ENCODE measurements at regions of chr14 and their contacts with region 1.

Region 1: GRCh38 chr14:75307700-75308379 is 29.2 kb downstream of the FOS start:
- DNase-seq: peak; percentile 62
- CTCF ChIP-seq: peak; percentile 92

Region 2: DNA sequence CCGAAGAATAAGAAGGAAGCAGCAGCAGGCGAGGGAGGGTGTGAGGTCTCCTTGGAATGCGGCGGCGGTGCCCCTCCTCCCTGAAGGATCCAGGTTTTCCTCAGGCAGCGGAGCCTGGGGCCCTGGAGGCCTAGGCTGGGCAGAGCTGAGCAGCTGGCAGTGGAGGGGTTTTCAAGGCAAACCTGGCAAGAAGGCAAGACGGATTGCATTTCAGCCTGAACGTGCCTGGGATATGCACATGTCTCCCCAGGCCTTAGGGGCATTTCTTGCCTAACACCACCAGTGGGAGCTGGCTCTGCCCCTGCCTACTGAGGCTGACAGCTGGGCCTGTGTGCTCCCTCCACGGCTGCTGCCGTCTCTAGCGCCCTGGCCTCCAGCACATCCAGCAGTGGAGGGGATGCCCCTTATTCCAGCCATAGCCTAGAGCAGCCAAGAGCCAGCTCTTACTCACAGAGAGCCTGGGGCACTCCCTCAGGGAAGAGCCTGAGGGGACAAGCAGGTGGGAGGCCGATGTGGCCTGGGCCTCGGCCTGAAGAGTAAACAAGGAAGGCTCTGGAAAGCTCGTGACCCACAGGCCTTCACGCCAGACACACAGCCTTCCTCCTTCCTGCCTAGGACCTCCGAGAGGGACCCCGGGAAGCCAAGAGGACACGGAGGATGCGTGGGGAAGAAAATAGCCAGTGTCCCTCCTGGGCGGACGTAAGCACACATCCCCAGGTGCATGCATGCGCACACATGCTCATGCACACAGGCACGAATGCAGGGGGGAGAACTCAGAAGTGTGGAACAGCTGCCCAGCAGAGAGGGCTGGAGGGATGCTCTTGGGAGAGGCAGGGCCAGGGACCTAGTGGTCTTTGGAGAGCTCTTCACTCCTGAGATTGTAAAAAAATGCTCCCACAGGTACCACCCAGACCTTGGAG is 328.1 kb before region 1 on chr14:
- in situ Hi-C with region 1: no loop called
- DNase-seq: peak; percentile 24
- CTCF ChIP-seq: no peak

Region 3: DNA sequence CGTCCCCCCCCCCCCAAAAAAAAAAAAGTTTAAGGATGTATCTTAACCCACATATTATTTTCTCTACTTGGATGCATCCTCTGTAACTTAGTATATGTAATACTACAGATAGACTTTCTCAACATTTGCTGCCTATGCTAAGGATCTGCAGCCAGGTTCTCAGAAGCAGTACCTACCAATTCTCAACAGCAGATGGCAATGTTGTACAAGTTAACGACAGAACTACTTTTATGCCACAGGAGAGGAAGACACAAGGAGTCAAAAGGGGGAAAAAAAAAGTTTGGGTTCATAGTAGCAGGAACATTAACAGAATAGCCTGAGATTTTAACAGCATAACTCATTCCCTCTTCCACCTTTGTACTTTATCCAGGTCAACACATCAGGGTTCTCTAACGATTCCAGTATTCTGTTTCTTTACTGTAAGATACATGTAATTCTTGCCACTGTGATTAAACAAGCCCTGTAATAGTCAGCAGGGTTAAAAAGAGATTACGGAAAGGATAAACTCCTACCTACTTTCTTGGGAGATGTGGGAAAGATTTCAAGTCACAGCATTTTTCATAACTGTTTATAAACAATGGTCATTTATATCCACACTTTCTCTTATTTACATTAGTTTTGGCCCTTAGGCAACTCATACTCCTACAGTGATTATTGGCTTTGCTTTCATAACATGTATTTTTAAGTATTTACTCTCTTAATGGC is 175.3 kb before region 1 on chr14:
- in situ Hi-C with region 1: loop called (anchors 5 kb)
- DNase-seq: peak; percentile 47
- CTCF ChIP-seq: peak; percentile 74

Region 4: DNA sequence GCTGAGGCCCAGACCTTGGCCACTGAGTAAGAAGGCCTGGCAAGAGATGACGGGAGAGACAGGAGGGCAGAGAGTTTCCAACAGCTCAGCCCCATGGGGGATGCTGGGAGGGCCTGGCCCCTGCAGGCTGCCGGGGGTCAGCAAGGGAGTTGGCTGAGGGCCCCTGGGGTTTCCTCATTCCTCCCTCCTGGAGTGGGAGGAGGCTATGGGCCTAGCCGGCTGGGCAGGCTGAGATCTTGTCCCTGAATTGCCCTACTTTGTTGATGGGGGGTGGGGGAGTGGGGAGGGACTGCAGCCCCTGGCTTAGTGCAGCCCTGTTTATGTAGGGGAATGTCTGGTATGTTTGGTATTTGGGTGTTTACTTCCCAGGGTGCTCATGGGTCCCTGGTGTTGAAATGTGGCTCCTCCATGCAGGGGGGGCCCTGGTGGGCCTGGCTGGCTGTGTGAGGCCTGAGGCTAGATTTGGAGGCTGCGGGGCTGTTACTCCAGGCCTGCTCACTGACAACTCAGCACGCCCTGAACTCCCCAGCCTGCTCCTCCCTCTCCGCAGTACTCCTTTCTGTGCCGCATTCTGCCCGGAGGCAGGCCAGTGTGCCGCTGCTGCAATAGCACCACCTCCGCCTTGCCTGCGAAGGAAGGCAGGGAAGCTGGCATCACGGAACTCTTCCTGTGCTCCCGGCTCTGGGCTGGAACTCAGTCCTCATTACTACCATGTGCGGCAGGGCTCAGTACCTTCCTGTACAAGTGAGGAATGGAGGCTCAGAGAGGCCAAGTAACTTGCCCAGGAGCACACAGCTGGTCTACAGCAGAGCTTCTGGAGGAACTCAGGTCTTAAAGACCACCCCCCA is 145.3 kb after region 1 on chr14:
- in situ Hi-C with region 1: loop called (anchors 10 kb)
- DNase-seq: no peak
- CTCF ChIP-seq: no peak

Region 5: GRCh38 chr14:75487155-75487671 is 179.4 kb after region 1 on chr14:
- in situ Hi-C with region 1: loop called (anchors 10 kb)
- DNase-seq: peak; percentile 57
- CTCF ChIP-seq: no peak

Region 6: DNA sequence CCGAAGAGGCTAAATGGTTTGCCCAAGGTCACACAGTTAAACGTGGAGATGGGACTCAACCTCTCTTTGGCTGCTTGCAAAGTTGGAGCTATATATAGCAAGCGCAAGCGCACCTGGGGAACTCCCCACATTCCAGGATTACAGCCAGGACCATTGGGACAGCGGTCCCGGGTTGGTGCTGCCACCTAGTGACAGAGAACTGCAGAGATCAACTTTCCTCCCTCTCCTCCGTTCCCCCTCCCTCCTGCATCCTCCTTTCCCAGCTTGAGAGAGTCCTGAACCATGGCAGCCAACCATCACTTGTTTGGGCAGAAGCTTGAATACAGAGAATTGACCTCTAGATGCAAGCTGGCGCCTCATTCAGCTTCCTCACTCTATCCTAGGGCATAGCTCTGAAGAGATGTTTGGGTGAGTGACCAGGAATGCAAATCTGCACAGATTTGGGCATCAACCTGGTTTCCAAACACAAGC is 253.2 kb after region 1 on chr14:
- in situ Hi-C with region 1: loop called (anchors 10 kb)
- DNase-seq: peak; percentile 60
- CTCF ChIP-seq: peak; percentile 69

Region 7: GRCh38 chr14:75648066-75648838 is 340.4 kb after region 1 on chr14:
- in situ Hi-C with region 1: loop called (anchors 5 kb)
- DNase-seq: no peak
- CTCF ChIP-seq: no peak

Region 8: DNA sequence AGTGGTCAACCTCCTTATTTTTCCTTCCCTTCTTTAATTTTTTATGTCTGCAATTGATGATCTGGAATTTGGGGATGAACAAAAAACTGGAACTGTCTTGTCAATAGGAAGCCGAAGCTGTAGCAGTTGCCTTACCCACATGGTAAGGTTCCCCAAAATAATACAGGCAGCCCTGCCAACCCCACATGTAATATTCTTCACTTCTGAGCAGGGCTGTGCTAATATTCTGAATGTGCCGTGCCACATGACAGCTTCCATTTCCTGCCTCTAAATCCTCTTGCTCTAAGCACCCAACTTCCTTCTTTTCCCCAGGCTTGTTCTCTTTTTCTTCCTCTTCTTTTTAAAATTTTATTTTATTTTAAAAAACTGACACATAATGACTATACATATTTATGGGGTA is 883.5 kb after region 1 on chr14:
- in situ Hi-C with region 1: no loop called
- DNase-seq: no peak
- CTCF ChIP-seq: no peak